SK-N-SH (cell line): ENCODE measurements at regions of chr7 and their contacts with region 1.

Region 1: GRCh38 chr7:106744563-106745091 is 83.7 kb upstream of the CCDC71L start:
- DNase-seq: no peak
- H3K4me3 ChIP-seq: no peak overlapping the region
- H3K27ac ChIP-seq: no peak overlapping the region
- H3K4me1 ChIP-seq: peaks cover 0 to 3% of the 10 kb centered on the region in 2 experiments; a peak in 1 of 4 replicates
- H3K27me3 ChIP-seq: no peaks in the 10 kb centered on the region
- CTCF ChIP-seq: no peak
- EP300 ChIP-seq: no peak
- RAD21 ChIP-seq: no peak

Region 2: GRCh38 chr7:106757846-106758245 is 13.2 kb after region 1 on chr7:
- CTCF ChIA-PET with region 1: interaction called, 10 read pairs
- POLR2A ChIA-PET with region 1: no interaction called
- DNase-seq: no peak
- H3K4me3 ChIP-seq: no peak overlapping the region
- H3K27ac ChIP-seq: no peak overlapping the region; a peak in 1 of 4 replicates
- H3K4me1 ChIP-seq: peaks cover 8% of the 10 kb centered on the region in 2 experiments; a peak in 3 of 4 replicates
- H3K27me3 ChIP-seq: no peaks in the 10 kb centered on the region
- CTCF ChIP-seq: no peak
- EP300 ChIP-seq: no peak
- RAD21 ChIP-seq: no peak